Heart right ventricle (tissue), 16 donors: ENCODE measurements at regions of chr11 and their contacts with region 1.

Region 1: GRCh38 chr11:47373876-47374720 is 4.2 kb downstream of the SPI1 start:
- DNase-seq: peak; percentile 83 to 89
- ATAC-seq: peak; percentile 71 to 86 (median 80)
- H3K4me3 ChIP-seq: peak overlapping the region in 1 of 10 donors; percentile 66
- H3K27ac ChIP-seq: peak overlapping the region in 1 of 10 donors; percentile 98
- H3K4me1 ChIP-seq: peaks cover 0 to 40% (median 0%) of the 10 kb centered on the region in 9 donors
- H3K27me3 ChIP-seq: no peaks in the 10 kb centered on the region
- CTCF ChIP-seq: peak; percentile 95 to 99 (median 97)

Region 2: DNA sequence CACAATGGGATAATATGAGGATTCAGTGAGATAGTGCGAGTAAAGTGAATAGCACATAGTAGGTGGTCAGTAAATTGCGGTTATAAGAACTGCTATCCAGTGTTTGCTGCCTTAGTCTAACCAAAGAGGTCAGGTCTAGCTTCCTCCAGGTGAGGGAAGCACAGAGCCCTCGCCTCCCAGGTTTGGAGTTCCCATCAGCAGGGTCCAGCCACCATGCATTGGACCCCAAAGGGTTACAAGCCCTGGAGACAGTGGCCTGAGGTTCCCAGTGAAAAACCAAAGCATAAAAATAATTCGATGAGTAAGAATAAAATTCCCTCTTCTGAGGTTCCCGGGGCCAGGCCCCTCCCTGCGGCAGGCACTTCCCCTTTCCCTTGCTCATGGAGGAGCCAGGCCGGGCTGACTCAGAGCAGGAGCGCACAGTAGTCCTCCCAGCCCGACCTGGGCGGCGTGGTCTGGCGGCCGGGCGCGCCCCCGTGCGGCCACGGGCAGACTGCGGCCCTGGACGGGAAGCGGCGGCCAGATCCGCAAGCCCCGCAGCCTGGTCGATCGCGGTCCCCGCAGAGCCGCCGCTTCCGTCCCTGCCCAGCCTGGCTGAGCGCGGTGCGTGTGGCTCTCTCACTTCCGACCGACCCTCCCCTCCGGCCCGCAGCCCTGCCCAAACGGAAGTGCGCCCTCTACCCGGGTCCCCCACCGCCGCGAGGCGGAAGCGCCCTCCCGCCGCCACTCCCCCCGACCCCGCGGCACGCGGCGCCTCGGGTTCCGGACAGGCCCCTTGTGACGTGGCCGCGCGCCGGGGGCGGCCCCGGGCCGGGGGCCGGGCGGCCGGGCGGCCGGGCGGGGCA is 33.9 kb after region 1 on chr11 and contains the start of gene SLC39A13:
- intact Hi-C with region 1: loop called in 7 of 10 experiments (anchors 1 to 5 kb)
- DNase-seq: peak; percentile 93 to 96
- ATAC-seq: peak; percentile 87 to 94 (median 91)
- H3K4me3 ChIP-seq: peak within 1 kb of the TSS; percentile 59 to 86 (median 77)
- H3K27ac ChIP-seq: peak within 1 kb of the TSS; percentile 89 to 98 (median 94)
- H3K4me1 ChIP-seq: peaks cover 11 to 45% (median 32%) of the 10 kb centered on the region in 9 donors
- H3K27me3 ChIP-seq: no peaks in the 10 kb centered on the region
- CTCF ChIP-seq: peak; percentile 55 to 96 (median 87)
- total RNA-seq, gene SLC39A13: 31.1 to 54.5 (median 40.8) TPM

Region 3: DNA sequence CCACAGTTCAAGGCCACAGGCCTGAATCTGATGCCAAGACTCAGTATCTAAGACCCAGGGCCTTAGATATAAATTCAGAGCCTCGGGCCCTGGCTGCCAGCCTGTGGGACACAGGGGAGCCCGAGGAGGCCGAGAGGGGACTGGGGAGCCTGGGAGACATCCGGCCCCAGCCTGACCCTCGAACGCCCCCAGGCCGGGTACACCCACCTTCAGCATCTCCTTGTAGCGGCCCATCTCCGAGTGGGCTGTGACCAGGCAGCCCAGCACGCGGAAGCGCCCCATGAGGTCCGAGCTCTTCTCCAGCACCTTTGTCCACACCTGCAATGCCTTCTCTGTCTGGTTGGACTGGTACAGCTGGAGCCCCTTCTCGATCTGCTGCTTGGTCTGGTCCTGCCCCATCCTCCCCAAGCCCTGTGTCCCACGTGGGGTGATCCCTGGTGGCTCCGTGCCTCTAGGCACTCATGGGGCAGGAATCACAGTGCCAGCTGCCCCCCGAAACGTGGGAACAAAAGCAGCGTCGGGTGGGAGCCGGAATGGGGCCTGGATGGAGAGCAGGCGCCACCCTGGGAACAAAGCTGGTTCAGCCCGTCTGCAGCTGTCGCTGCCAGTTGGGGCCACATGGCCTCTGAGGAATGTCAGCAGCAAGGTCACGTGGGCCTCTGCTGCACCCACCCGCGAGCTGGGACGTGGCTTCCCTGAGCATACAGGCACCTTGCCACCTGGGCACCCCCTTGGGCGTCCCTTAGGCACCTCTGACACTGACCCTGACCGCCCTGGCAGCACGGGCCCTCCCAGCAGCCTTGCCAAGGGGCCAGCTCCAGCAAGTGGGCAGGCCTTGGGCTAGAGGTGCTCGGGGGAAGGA is 74.7 kb after region 1 on chr11 and contains the start of gene RAPSN:
- intact Hi-C with region 1: loop called in 6 of 10 experiments (anchors 2 to 5 kb)
- DNase-seq: peak; percentile 20 to 37
- ATAC-seq: peak; percentile 62 to 88 (median 82)
- H3K4me3 ChIP-seq: no peak within 1 kb of the TSS
- H3K27ac ChIP-seq: no peak within 1 kb of the TSS
- H3K4me1 ChIP-seq: peaks cover 0 to 11% (median 0%) of the 10 kb centered on the region in 9 donors
- H3K27me3 ChIP-seq: no peaks in the 10 kb centered on the region
- CTCF ChIP-seq: no peak
- total RNA-seq, gene RAPSN: 2.9 to 10.2 (median 4.0) TPM

Region 4: GRCh38 chr11:47454180-47454644 is 80.1 kb after region 1 on chr11:
- intact Hi-C with region 1: loop called (anchors 1 to 5 kb)
- DNase-seq: peak; percentile 45 to 79
- ATAC-seq: peak; percentile 73 to 91 (median 87)
- H3K4me3 ChIP-seq: peak overlapping the region in 1 of 10 donors; percentile 11
- H3K27ac ChIP-seq: no peak overlapping the region
- H3K4me1 ChIP-seq: peaks cover 0 to 8% (median 1%) of the 10 kb centered on the region in 9 donors
- H3K27me3 ChIP-seq: no peaks in the 10 kb centered on the region
- CTCF ChIP-seq: peak; percentile 53 to 86 (median 79)

Region 5: GRCh38 chr11:47616726-47617416 is 242.8 kb after region 1 on chr11:
- intact Hi-C with region 1: loop called in 4 of 10 experiments (anchors 5 to 10 kb)
- DNase-seq: peak in 1 of 2 donors; percentile 66
- ATAC-seq: peak; percentile 59 to 90 (median 82)
- H3K4me3 ChIP-seq: no peak overlapping the region
- H3K27ac ChIP-seq: peak overlapping the region in 1 of 10 donors; percentile 37
- H3K4me1 ChIP-seq: peaks cover 0 to 11% (median 0%) of the 10 kb centered on the region in 9 donors
- H3K27me3 ChIP-seq: no peaks in the 10 kb centered on the region
- CTCF ChIP-seq: peak; percentile 46 to 82 (median 76)

Region 6: DNA sequence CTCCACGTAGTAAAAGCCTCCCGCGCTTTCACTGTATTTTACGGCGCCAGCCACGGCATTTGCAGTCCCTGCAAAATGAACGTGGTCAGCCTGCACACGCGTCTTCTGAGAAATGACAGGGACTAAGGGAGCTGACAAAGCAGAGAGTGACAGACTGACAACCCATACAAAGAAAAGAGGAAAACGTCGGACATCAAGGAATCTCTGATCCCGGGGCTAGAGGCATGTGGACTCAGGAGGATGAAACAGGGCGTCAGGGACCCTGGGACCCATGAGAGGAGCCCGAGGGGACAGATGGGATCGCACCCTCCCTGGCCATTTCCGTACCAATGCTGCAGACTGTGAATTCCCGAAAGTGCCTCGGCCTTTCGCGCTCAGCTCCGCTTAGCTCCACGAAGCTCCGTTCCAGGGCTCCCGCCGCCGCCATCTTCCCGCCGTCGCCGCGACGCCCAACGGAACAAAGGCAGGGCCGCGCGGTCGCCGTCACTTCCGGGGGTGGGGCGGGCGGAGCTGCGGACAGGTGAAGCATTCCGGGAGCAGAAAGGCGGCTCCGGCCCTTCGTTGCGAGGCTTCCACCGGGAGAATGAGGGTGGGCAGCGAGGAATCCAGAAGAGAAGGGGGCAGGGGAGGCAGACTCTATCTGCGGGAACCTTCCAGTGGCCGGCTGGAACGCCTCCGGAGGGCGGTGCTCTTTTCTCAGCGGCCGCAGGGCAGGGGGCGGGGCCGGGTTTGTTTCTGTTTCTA is 474.0 kb after region 1 on chr11 and contains the start of gene NUP160:
- intact Hi-C with region 1: loop called in 3 of 10 experiments (anchors 5 to 10 kb)
- DNase-seq: peak; percentile 86 to 87
- ATAC-seq: peak; percentile 91 to 97 (median 95)
- H3K4me3 ChIP-seq: peak within 1 kb of the TSS; percentile 53 to 99 (median 86)
- H3K27ac ChIP-seq: peak within 1 kb of the TSS; percentile 69 to 95 (median 92)
- H3K4me1 ChIP-seq: peaks cover 3 to 50% (median 30%) of the 10 kb centered on the region in 9 donors
- H3K27me3 ChIP-seq: no peaks in the 10 kb centered on the region
- CTCF ChIP-seq: peak in 2 of 9 donors; percentile 29 to 35
- total RNA-seq, gene NUP160: 13.4 to 17.7 (median 14.7) TPM

Region 7: DNA sequence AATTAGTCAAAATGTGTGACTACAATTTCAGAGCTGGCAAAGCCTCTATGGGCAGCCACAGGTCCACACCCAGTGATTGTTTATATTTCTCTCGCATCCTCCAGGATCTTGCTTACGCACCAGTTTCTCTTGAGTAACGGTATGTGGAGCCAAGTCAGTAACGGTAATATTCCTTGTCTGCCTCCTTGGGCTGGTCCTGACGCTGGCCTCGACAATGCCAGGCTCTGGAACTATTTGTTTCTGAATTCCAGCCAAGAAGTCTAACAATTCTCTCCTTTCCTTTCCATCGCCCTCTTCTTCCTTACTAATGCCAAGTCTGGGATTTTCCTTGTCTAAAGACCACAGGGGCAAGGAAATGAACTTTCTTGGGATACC is 484.1 kb after region 1 on chr11:
- intact Hi-C with region 1: loop called in 3 of 10 experiments (anchors 5 to 10 kb)
- DNase-seq: no peak
- ATAC-seq: peak in 7 of 8 donors; percentile 36 to 76 (median 50)
- H3K4me3 ChIP-seq: no peak overlapping the region
- H3K27ac ChIP-seq: peak overlapping the region in 1 of 10 donors; percentile 9
- H3K4me1 ChIP-seq: peaks cover 0 to 30% (median 2%) of the 10 kb centered on the region in 9 donors
- H3K27me3 ChIP-seq: no peaks in the 10 kb centered on the region
- CTCF ChIP-seq: no peak